Left ventricle myocardium superior (tissue), 1 donor: ENCODE measurements at regions of chr4 and their contacts with region 1.

Region 1: GRCh38 chr4:121370729-121371325 is 10.0 kb downstream of the QRFPR start:
- DNase-seq: no peak
- ATAC-seq: peak; percentile 60

Region 2: GRCh38 chr4:120927801-120928409 is 442.9 kb before region 1 on chr4:
- intact Hi-C with region 1: no loop called
- DNase-seq: no peak
- ATAC-seq: no peak

Region 3: DNA sequence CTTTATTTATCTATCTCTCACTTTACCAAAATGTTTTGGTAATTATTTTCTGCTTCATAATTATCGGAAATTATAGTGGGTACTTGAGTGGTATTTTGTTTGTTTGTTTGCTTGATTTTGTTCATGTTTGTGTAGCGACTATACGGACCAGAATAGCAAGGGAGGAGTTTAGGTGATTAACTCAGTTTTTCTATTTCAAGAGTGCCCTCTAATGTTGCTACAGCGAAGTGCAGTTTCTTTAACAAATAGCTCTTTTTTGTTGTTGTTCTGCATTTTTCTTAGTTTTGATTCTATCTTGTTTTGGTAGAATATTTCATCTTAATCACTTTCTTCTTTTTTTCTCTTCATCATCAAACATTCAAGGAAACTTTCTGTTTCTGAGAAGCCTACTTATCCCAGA is 50.8 kb after region 1 on chr4:
- intact Hi-C with region 1: loop called (anchors 2 kb)
- DNase-seq: no peak
- ATAC-seq: peak; percentile 27

Region 4: GRCh38 chr4:121656269-121656641 is 285.4 kb after region 1 on chr4:
- intact Hi-C with region 1: loop called (anchors 10 kb)
- DNase-seq: peak; percentile 51
- ATAC-seq: peak; percentile 81

Region 5: GRCh38 chr4:121736735-121737351 is 366.0 kb after region 1 on chr4:
- intact Hi-C with region 1: loop called (anchors 10 kb)
- DNase-seq: no peak
- ATAC-seq: peak; percentile 43